Pancreas (tissue), 10 donors: ENCODE measurements at regions of chr5 and their contacts with region 1.

Region 1: GRCh38 chr5:50958852-50959457 is 292.5 kb downstream of the PARP8 start:
- DNase-seq: peak in 2 of 6 donors; percentile 24 to 26
- ATAC-seq: peak in 3 of 4 donors; percentile 55 to 67 (median 60)
- H3K4me3 ChIP-seq: no peak overlapping the region
- H3K27ac ChIP-seq: no peak overlapping the region
- H3K4me1 ChIP-seq: peaks cover 6% of the 10 kb centered on the region in 3 donors
- H3K27me3 ChIP-seq: peaks cover 0 to 11% (median 7%) of the 10 kb centered on the region in 4 donors
- CTCF ChIP-seq: peak; percentile 17 to 47 (median 22)

Region 2: GRCh38 chr5:52657247-52657645 is 1698.3 kb after region 1 on chr5:
- intact Hi-C with region 1: loop called in 2 of 3 experiments (anchors 5 to 10 kb)
- DNase-seq: no peak
- ATAC-seq: peak in 3 of 4 donors; percentile 54 to 79 (median 69)
- H3K4me3 ChIP-seq: no peak overlapping the region
- H3K27ac ChIP-seq: no peak overlapping the region
- H3K4me1 ChIP-seq: peaks cover 0 to 4% (median 0%) of the 10 kb centered on the region in 3 donors
- H3K27me3 ChIP-seq: peaks cover 0 to 10% (median 5%) of the 10 kb centered on the region in 4 donors
- CTCF ChIP-seq: peak; percentile 33 to 52 (median 39)